GM12878 (cell line): ENCODE measurements at regions of chr17 and their contacts with region 1.

Region 1: DNA sequence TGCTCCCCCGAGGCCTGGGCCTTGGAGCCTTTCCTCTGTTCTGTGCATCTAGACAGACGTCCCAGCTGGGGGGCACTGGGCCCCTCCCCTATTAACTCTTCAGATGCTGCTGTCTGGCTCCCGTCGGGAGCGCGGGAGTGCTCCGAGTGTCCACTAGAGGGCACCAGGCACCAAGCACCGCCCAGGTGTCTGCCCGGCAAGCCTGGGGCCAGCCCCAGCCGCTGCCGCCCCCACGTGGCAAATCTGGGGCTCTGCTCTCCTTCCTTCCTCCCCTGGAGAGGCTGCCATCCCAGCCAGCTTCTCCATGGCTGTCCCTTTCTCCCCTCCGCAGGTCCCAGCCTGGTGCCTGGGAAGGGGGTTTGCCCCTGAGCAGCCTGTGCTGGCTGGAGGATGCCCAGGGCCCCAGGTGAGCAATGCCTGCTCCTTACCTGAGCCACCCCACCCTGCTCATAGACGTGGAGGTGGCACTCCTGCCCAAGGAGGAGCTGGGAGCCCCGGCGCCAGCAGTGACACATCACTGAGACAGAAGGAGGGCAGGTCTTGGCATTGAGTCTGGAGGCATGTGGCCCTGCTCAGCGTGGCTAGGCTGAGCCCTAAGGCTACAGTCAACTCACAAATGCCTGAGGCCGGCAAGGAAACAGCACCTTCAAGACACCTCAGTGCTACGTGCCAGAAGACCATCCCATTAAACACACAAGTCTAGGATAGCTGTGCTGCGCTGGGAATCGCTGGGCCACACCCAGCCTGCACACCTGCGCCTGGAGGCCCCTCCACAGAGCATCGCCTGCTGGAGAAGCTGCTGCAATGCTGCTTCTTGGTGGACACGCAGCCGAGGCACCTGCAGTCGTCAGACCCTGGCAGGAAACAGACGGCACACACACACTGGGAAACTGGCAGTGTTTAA is 19.7 kb downstream of the TMEM235 start:
- DNase-seq: no peak
- ATAC-seq: peak; percentile 87
- H3K4me3 ChIP-seq: no peak overlapping the region
- H3K27ac ChIP-seq: no peak overlapping the region
- H3K4me1 ChIP-seq: peaks cover 29% of the 10 kb centered on the region
- H3K27me3 ChIP-seq: no peaks in the 10 kb centered on the region; a peak in 1 of 4 replicates
- CTCF ChIP-seq: peak; percentile 99 to 100 (median 99)
- EP300 ChIP-seq: no peak
- POLR2A ChIP-seq: no peak
- RAD21 ChIP-seq: peak; percentile 83

Region 2: GRCh38 chr17:78040440-78041385 is 210.4 kb before region 1 on chr17:
- CTCF ChIA-PET with region 1: interaction called, 12 read pairs
- POLR2A ChIA-PET with region 1: no interaction called
- RAD21 ChIA-PET with region 1: interaction called, 4 read pairs
- SMC1A ChIA-PET with region 1: no interaction called
- in situ Hi-C with region 1: no loop called
- intact Hi-C with region 1: no loop called
- DNase-seq: peak; percentile 21
- ATAC-seq: peak; percentile 99
- H3K4me3 ChIP-seq: peak overlapping the region; percentile 57; the same call in 1 of the 2 replicates
- H3K27ac ChIP-seq: peak overlapping the region; percentile 34; the same call in 1 of the 2 replicates
- H3K4me1 ChIP-seq: no peaks in the 10 kb centered on the region
- H3K27me3 ChIP-seq: no peaks in the 10 kb centered on the region
- CTCF ChIP-seq: peak in 1 of 3 experiments; percentile 25; a peak in 2 of 6 replicates
- EP300 ChIP-seq: no peak
- POLR2A ChIP-seq: no peak
- RAD21 ChIP-seq: no peak

Region 3: DNA sequence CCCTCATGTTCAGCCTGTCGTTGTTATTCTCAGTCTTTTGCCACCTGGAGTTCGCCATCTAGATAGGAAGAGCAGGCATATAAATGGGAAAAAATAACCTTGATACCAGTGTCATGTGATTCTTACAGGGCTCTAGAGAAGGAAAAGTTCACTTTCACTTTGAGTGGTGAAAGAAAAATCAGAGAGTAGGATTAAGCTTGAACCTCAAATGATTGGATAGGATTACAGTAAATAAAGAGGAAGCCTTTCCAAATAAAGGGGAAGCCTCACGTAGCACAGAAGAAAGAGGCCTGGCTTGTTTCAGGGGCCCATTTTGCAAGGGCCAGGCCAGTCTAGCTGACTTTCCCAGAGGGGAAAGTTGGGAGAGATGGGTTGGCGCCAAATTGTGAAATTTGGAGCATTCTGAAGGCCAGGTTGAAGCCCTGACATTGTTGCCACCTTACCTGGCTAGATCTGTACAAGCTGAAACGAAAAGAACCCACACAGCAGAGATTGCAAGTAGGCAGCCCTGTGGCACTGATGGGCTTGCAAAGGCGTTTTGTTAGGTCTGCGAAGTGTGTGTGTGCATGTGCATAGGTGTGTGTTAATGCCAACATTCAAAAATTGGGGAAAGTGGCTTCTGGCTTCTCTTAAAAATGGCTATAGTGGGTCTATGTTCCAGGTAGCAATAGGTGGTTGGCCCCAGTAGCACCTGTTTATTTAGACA is 161.4 kb before region 1 on chr17:
- CTCF ChIA-PET with region 1: interaction called, 82 read pairs
- POLR2A ChIA-PET with region 1: no interaction called
- RAD21 ChIA-PET with region 1: interaction called, 76 read pairs
- SMC1A ChIA-PET with region 1: interaction called, 47 read pairs
- in situ Hi-C with region 1: no loop called
- intact Hi-C with region 1: loop called (anchors 2 kb)
- DNase-seq: no peak
- ATAC-seq: no peak
- H3K4me3 ChIP-seq: no peak overlapping the region
- H3K27ac ChIP-seq: no peak overlapping the region
- H3K4me1 ChIP-seq: no peaks in the 10 kb centered on the region
- H3K27me3 ChIP-seq: no peaks in the 10 kb centered on the region
- CTCF ChIP-seq: no peak
- EP300 ChIP-seq: no peak
- POLR2A ChIP-seq: no peak
- RAD21 ChIP-seq: no peak

Region 4: GRCh38 chr17:78112518-78113226 is 138.5 kb before region 1 on chr17:
- CTCF ChIA-PET with region 1: interaction called, 17 read pairs
- POLR2A ChIA-PET with region 1: interaction called, 3 read pairs
- RAD21 ChIA-PET with region 1: interaction called, 6 read pairs
- SMC1A ChIA-PET with region 1: interaction called, 3 read pairs
- in situ Hi-C with region 1: no loop called
- intact Hi-C with region 1: loop called (anchors 2 kb)
- DNase-seq: no peak
- ATAC-seq: peak; percentile 84
- H3K4me3 ChIP-seq: no peak overlapping the region
- H3K27ac ChIP-seq: no peak overlapping the region; the same call in 1 of the 2 replicates
- H3K4me1 ChIP-seq: peaks cover 27% of the 10 kb centered on the region
- H3K27me3 ChIP-seq: no peaks in the 10 kb centered on the region
- CTCF ChIP-seq: peak; percentile 93 to 99 (median 96); a peak in 5 of 6 replicates
- EP300 ChIP-seq: no peak
- POLR2A ChIP-seq: peak; percentile 77
- RAD21 ChIP-seq: peak; percentile 96

Region 5: DNA sequence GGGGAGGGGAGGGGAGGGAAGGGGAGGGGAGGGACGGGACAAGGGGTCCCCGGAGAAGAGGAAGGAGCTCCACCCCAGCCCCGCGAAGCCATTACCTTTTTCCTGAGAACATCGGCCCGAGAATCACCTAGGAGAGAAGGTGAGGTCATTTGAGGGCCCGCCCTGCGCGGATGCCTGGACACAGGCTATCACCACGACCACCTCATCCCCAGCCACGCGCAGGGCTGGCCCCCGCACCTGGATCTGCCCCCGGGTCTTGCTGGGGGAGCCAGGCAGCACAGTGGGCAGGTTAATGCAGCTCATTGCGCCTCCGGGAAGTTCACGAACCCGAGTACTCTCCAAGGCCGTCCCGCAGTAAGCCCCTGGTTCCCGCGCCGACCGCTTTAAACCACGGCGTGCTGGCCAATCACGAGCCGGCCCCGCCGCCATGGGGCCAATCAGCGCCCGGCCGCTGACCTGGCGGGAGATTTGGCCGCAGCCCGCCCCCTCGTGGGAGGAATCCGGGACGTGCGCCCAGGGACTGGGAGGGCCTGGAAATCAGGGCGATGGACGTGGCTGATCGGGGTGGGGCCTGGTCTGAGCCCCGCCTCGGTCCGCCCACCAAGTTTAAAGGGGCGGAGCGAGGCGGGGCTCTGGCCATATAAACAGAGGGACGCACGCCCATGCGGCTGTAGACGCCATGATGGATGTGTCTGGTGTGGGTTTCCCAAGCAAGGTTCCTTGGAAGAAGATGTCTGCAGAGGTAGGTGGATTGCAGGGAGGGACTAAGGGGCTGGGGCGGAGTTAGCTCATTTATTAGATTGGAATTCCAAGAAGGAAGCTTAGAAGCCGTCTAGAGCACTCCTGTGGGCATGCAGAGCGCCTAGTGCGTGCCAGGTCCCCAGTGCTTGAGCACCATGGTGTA is 64.2 kb before region 1 on chr17 and contains the starts of genes AFMID and TK1:
- CTCF ChIA-PET with region 1: interaction called, 13 read pairs
- POLR2A ChIA-PET with region 1: no interaction called
- RAD21 ChIA-PET with region 1: interaction called, 3 read pairs
- SMC1A ChIA-PET with region 1: interaction called, 4 read pairs
- in situ Hi-C with region 1: no loop called
- intact Hi-C with region 1: loop called (anchors 5 kb)
- DNase-seq: peak; percentile 87
- ATAC-seq: peak; percentile 95
- H3K4me3 ChIP-seq: peak within 1 kb of the TSS; percentile 96
- H3K27ac ChIP-seq: peak within 1 kb of the TSS; percentile 71
- H3K4me1 ChIP-seq: peaks cover 5% of the 10 kb centered on the region; the same call in 1 of the 2 replicates
- H3K27me3 ChIP-seq: no peaks in the 10 kb centered on the region
- CTCF ChIP-seq: peak; percentile 27 to 56 (median 37); a peak in 3 of 6 replicates
- EP300 ChIP-seq: no peak
- POLR2A ChIP-seq: peak; percentile 94
- RAD21 ChIP-seq: no peak
- polyA plus RNA-seq, gene AFMID: 50.3 to 98.8 TPM
- polyA plus RNA-seq, gene TK1: 4.6 to 13.0 TPM

Region 6: DNA sequence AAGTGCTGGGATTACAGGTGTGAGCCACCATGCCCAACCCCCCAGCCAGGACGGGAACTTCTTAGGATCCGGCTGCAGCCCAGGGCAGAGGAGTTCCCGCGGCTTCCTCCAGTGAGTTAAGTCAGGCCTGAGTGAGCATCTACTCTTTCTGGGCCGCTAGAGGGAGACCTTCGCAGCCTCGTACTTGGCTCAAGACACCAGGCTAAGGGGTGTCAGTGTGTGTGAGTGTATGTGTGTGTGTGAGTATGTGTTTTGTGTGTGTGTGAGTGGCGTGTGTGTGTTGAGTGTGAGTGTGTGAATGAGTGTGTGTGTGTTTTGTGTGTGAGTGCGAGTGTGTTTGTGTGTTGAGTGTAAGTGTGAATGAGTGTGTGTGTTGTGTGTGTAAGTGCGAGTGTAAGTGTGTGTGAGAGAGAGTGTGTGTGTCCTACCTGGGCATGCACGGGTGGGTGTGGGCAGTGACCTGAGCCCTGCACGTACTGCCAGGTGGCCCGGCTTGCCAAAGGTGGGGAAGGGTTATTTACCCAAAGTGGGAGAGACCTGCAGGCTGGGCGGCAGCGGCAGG is 38.7 kb after region 1 on chr17:
- CTCF ChIA-PET with region 1: interaction called, 10 read pairs
- POLR2A ChIA-PET with region 1: interaction called, 7 read pairs
- RAD21 ChIA-PET with region 1: interaction called, 9 read pairs
- SMC1A ChIA-PET with region 1: no interaction called
- in situ Hi-C with region 1: no loop called
- intact Hi-C with region 1: no loop called
- DNase-seq: peak; percentile 30
- ATAC-seq: peak; percentile 100
- H3K4me3 ChIP-seq: no peak overlapping the region
- H3K27ac ChIP-seq: no peak overlapping the region
- H3K4me1 ChIP-seq: peaks cover 8% of the 10 kb centered on the region
- H3K27me3 ChIP-seq: no peaks in the 10 kb centered on the region
- CTCF ChIP-seq: peak; percentile 88 to 92 (median 89)
- EP300 ChIP-seq: no peak
- POLR2A ChIP-seq: no peak
- RAD21 ChIP-seq: peak; percentile 91

Region 7: GRCh38 chr17:78421484-78422266 is 170.5 kb after region 1 on chr17:
- CTCF ChIA-PET with region 1: interaction called, 37 read pairs
- POLR2A ChIA-PET with region 1: no interaction called
- RAD21 ChIA-PET with region 1: interaction called, 11 read pairs
- SMC1A ChIA-PET with region 1: interaction called, 25 read pairs
- in situ Hi-C with region 1: no loop called
- intact Hi-C with region 1: loop called (anchors 1 kb)
- DNase-seq: peak; percentile 7
- ATAC-seq: peak; percentile 96
- H3K4me3 ChIP-seq: no peak overlapping the region
- H3K27ac ChIP-seq: no peak overlapping the region
- H3K4me1 ChIP-seq: no peaks in the 10 kb centered on the region; the same call in 1 of the 2 replicates
- H3K27me3 ChIP-seq: no peaks in the 10 kb centered on the region
- CTCF ChIP-seq: peak; percentile 95 to 99 (median 99); a peak in 5 of 6 replicates
- EP300 ChIP-seq: no peak
- POLR2A ChIP-seq: no peak
- RAD21 ChIP-seq: peak; percentile 92